Activated naive CD8-positive, alpha-beta T cell treated with anti-CD3 and anti-CD28 coated beads, Interleukin-2, amount 10 ng/mL, durations not matched to agents 7 days and 5 days (primary cell): ENCODE measurements at regions of chr2 and their contacts with region 1.

Region 1: DNA sequence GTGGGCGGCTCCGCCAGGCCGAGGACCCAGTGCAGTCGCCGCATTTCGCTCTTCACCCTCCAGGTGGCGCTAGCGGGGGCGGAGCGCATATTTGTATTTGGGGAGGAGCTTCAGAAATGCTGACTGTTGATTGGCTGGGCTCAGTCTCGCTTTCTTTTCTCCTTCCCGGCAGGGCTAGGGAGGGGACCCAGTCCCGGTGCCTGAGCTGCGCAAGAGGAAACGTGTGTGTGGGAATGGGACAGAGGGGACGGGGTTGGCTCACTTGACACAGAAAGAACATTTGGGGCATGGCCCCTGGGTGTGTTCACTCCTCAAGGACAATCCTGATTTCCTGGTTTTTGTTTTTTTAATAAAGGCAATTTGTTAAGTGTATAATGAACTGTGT is 20.3 kb upstream of the DNMT3A start:
- DNase-seq: peak; percentile 97
- ATAC-seq: peak; percentile 98
- H3K4me3 Mint-ChIP-seq: peak overlapping the region; percentile 82
- H3K27ac Mint-ChIP-seq: peak overlapping the region; percentile 89
- H3K4me1 Mint-ChIP-seq: peaks cover 8% of the 10 kb centered on the region
- H3K27me3 Mint-ChIP-seq: no peaks in the 10 kb centered on the region

Region 2: DNA sequence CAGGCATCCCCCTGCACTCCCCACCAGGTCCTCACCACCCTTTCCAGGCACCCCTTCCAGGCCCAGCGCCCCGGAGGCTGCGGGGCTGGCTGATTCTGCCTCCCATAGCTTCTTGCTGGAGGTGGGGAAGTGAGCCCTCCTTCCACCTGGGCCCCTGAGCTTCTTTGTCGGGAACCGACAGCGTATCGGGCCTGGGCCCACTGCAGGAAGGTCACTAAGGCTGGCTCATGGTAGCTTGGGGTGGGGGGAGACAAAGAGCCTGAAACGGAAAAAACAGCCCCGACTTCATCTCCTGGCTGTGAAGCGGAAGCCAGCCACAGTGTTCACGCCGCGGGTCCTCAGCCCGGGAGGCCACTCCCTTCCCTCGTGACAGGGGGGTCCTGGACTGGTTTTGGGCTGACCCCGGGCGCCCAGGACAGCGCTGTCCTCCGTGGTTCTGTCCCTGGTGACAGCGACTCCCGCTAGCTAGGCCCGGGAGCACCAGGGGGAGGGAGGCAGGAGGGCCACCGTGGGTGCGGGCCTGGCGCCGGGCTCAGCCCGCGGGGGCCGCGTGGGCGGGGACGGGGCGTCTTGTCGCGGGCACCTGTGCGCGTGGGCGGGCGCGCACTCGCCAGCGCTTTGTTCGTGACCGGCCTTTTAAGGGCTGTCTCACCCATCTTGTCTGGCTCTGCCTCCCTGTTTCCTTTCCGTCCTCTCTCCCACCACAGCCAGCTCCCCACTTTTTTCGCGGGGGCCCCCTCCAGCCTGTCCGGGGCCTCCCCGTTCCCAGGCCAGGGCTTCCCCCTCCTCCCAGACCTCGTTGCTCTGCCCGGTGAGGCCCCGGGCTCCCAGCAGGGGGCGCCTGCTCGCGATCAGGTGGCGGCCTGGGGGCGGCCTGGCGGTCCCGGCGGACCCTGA is 85.2 kb before region 1 on chr2:
- POLR2A ChIA-PET with region 1: interaction called, 10 read pairs
- DNase-seq: peak; percentile 93
- ATAC-seq: peak; percentile 48
- H3K4me3 Mint-ChIP-seq: peak overlapping the region; percentile 71
- H3K27ac Mint-ChIP-seq: peak overlapping the region; percentile 95
- H3K4me1 Mint-ChIP-seq: peaks cover 56% of the 10 kb centered on the region
- H3K27me3 Mint-ChIP-seq: no peaks in the 10 kb centered on the region

Region 3: GRCh38 chr2:25314514-25315315 is 47.3 kb before region 1 on chr2:
- POLR2A ChIA-PET with region 1: interaction called, 20 read pairs
- DNase-seq: peak; percentile 78
- ATAC-seq: peak; percentile 88
- H3K4me3 Mint-ChIP-seq: peak overlapping the region; percentile 82
- H3K27ac Mint-ChIP-seq: peak overlapping the region; percentile 95
- H3K4me1 Mint-ChIP-seq: peaks cover 47% of the 10 kb centered on the region
- H3K27me3 Mint-ChIP-seq: no peaks in the 10 kb centered on the region

Region 4: GRCh38 chr2:25376750-25377621 is 14.9 kb after region 1 on chr2:
- POLR2A ChIA-PET with region 1: interaction called, 37 read pairs
- DNase-seq: peak; percentile 97
- ATAC-seq: peak; percentile 99
- H3K4me3 Mint-ChIP-seq: peak overlapping the region; percentile 71
- H3K27ac Mint-ChIP-seq: peak overlapping the region; percentile 98
- H3K4me1 Mint-ChIP-seq: peaks cover 26% of the 10 kb centered on the region
- H3K27me3 Mint-ChIP-seq: no peaks in the 10 kb centered on the region

Region 5: DNA sequence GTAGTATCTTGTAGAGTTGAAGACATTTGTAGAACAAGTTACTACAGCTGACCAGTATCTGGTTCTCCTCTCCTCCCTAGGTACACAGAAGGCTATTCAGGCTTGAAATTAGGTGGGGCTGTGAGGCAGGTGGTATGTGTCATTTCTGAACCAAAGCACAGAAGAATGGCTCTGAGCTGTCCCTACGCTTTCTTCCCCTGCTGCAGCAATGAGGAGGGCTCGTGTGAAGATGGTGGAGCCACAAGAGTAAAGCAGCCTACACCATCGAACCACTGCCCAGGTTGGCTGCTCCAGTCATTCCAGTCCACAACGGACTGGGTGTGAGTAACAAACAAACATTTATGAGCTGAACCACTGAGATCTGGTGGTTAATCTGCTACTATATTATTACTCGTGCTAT is 162.5 kb after region 1 on chr2:
- POLR2A ChIA-PET with region 1: interaction called, 14 read pairs
- DNase-seq: no peak
- ATAC-seq: no peak
- H3K4me3 Mint-ChIP-seq: no peak overlapping the region
- H3K27ac Mint-ChIP-seq: no peak overlapping the region
- H3K4me1 Mint-ChIP-seq: peaks cover 7% of the 10 kb centered on the region
- H3K27me3 Mint-ChIP-seq: no peaks in the 10 kb centered on the region